ENCODE measurements at regions of chr5 and their contacts with region 1.

Region 1: DNA sequence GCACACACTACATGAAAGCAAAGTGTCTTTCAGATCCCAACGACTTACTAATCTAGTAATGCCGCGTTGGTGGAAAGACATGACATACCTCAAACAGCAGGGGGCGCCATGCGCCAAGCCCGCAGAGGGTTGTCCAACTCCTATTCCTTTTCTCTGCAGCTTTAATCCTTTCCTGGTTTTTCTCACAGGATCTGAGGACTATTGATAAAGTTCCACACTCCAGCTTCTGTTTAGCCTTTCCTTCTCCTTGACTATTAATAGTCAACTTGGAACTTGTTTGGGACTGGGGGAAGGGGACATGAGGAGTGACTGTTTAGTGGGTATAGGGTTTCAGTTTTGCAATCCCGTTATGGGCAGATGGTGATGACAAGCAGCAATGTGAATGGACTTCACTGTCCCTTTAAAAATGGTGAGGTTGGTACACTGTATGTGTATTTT is 62.9 kb downstream of the OTULIN start:
- DNase-seq: peak; percentile 71 to 91 (median 76)
- H3K4me3 ChIP-seq: no peak overlapping the region
- H3K27ac ChIP-seq: no peak overlapping the region
- H3K4me1 ChIP-seq: no peaks in the 10 kb centered on the region
- H3K27me3 ChIP-seq: no peaks in the 10 kb centered on the region
- CTCF ChIP-seq: peak; percentile 91 to 97 (median 94)
- POLR2A ChIP-seq: no peak

Region 2: GRCh38 chr5:14871210-14872069 is 144.0 kb after region 1 on chr5 and contains the start of gene ANKH:
- intact Hi-C with region 1: loop called in 1 of 2 experiments (anchors 10 kb)
- DNase-seq: peak; percentile 59 to 79 (median 66)
- H3K4me3 ChIP-seq: peak within 1 kb of the TSS in 3 of 4 donors; percentile 25 to 77 (median 31)
- H3K27ac ChIP-seq: peak within 1 kb of the TSS; percentile 21 to 97 (median 85)
- H3K4me1 ChIP-seq: peaks cover 0 to 12% of the 10 kb centered on the region in 2 donors
- H3K27me3 ChIP-seq: no peaks in the 10 kb centered on the region
- CTCF ChIP-seq: peak in 1 of 6 experiments; percentile 57
- POLR2A ChIP-seq: no peak
- total RNA-seq, gene ANKH: 4.8 to 45.6 (median 34.2) TPM

Region 3: GRCh38 chr5:15003511-15003920 is 276.1 kb after region 1 on chr5:
- intact Hi-C with region 1: loop called in 1 of 2 experiments (anchors 2 kb)
- DNase-seq: peak; percentile 46 to 83 (median 67)
- H3K4me3 ChIP-seq: no peak overlapping the region
- H3K27ac ChIP-seq: no peak overlapping the region
- H3K4me1 ChIP-seq: peaks cover 4 to 5% of the 10 kb centered on the region in 2 donors
- H3K27me3 ChIP-seq: no peaks in the 10 kb centered on the region
- CTCF ChIP-seq: peak; percentile 67 to 83 (median 76)
- POLR2A ChIP-seq: no peak

Region 4: GRCh38 chr5:15013654-15014463 is 286.4 kb after region 1 on chr5:
- intact Hi-C with region 1: loop called in 1 of 2 experiments (anchors 5 kb)
- DNase-seq: peak in 1 of 7 donors; percentile 17
- H3K4me3 ChIP-seq: no peak overlapping the region
- H3K27ac ChIP-seq: no peak overlapping the region
- H3K4me1 ChIP-seq: peaks cover 7 to 8% of the 10 kb centered on the region in 2 donors
- H3K27me3 ChIP-seq: no peaks in the 10 kb centered on the region
- CTCF ChIP-seq: peak; percentile 48 to 78 (median 68)
- POLR2A ChIP-seq: no peak